CD8-positive, alpha-beta T cell (primary cell): ENCODE measurements at regions of chr17 and their contacts with region 1.

Region 1: DNA sequence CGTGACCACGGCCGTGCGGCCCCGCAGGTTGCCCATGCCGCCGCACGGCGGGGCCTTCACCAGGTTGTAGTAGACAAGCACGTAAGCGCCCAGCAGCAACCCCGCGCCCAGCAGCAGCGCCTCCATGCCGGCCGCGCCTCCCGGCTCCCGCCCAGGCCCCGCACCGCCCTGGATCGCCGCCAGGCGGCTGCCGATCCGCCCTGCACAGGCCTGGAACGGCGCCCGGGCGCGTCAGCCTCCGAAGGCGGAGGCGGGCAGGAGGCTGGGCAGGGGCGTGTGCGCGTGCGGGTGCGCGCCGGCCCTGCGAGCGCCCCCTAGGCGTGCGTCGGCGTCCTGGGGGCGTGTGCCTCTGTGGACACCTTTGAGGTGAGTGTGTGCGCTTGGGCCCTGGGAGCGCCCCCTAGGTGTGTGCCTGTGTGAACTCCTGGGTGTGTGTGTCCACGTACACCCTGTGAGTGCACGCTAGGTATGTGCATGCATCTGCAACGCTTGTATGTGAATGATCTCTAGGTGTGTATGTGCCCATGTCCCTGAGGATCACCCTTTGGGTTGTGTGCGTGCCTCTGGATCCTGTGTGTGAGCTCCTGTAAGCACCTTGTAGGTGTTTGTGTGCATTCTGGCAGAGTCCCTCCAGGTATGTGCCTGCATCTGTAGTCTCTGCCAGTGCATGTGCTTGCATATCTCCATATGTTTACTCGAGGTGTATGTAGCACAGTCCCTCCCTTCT is at the start of gene DHRS13:
- DNase-seq: peak; percentile 87 to 98 (median 95)
- ATAC-seq: peak; percentile 93
- H3K4me3 ChIP-seq: peak within 1 kb of the TSS; percentile 71 to 72
- H3K4me3 Mint-ChIP-seq: peak within 1 kb of the TSS; percentile 93
- H3K27ac ChIP-seq: peak within 1 kb of the TSS; percentile 61 to 62
- H3K27ac Mint-ChIP-seq: peak within 1 kb of the TSS; percentile 90
- H3K4me1 ChIP-seq: peaks cover 31% of the 10 kb centered on the region
- H3K4me1 Mint-ChIP-seq: peaks cover 33% of the 10 kb centered on the region
- H3K27me3 ChIP-seq: no peaks in the 10 kb centered on the region
- H3K27me3 Mint-ChIP-seq: no peaks in the 10 kb centered on the region
- CTCF ChIP-seq: peak; percentile 100
- total RNA-seq, gene DHRS13: 27.3 to 30.9 TPM

Region 2: DNA sequence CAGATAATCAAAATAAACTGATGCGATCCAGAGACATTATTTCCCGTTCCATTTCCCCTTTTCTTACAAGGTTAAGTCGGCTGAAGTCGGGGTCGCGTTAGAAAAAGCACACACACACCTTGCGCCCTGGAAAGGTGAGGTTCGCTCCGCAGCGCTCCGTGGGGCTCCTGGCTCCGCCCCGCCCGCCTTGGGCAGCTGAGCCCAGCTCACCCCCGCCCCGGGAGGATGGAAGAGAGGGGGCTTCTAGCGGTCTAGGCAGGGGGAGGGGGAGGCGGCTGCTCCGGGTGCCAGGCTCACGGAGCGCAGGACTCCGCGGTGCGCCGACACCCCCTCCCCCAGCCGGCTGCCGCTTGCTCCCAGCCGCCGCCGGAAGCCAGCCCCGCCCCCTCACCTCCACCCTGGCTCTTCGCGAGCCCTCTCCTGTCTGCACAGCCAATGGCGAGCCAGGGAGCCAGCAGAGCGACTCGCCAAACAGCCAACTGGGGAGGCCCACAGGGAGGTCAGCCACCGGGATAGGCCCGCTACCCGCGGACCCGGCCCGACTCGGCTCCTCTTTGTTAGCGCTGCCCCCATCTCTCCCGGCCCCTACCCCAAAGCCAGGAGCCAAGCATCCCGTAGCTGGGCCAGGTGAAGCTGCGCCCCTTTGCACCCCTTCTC is 90.8 kb before region 1 on chr17:
- CTCF ChIA-PET with region 1: interaction called, 3 read pairs
- POLR2A ChIA-PET with region 1: interaction called, 4 read pairs
- intact Hi-C with region 1: loop called (anchors 1 kb)
- DNase-seq: peak; percentile 90 to 98 (median 96)
- ATAC-seq: peak; percentile 96
- H3K4me3 ChIP-seq: peak overlapping the region; percentile 67 to 99
- H3K4me3 Mint-ChIP-seq: peak overlapping the region; percentile 94
- H3K27ac ChIP-seq: peak overlapping the region; percentile 93 to 96
- H3K27ac Mint-ChIP-seq: peak overlapping the region; percentile 93
- H3K4me1 ChIP-seq: peaks cover 18% of the 10 kb centered on the region
- H3K4me1 Mint-ChIP-seq: peaks cover 35% of the 10 kb centered on the region
- H3K27me3 ChIP-seq: no peaks in the 10 kb centered on the region
- H3K27me3 Mint-ChIP-seq: no peaks in the 10 kb centered on the region
- CTCF ChIP-seq: no peak

Region 3: GRCh38 chr17:28849281-28849680 is 53.7 kb before region 1 on chr17:
- CTCF ChIA-PET with region 1: interaction called, 7 read pairs
- POLR2A ChIA-PET with region 1: interaction called, 5 read pairs
- intact Hi-C with region 1: loop called (anchors 1 to 2 kb)
- DNase-seq: peak in 3 of 9 experiments; percentile 13 to 32 (median 29)
- ATAC-seq: no peak
- H3K4me3 ChIP-seq: no peak overlapping the region
- H3K4me3 Mint-ChIP-seq: no peak overlapping the region
- H3K27ac ChIP-seq: no peak overlapping the region
- H3K27ac Mint-ChIP-seq: no peak overlapping the region
- H3K4me1 ChIP-seq: peaks cover 3% of the 10 kb centered on the region
- H3K4me1 Mint-ChIP-seq: peaks cover 6% of the 10 kb centered on the region
- H3K27me3 ChIP-seq: no peaks in the 10 kb centered on the region
- H3K27me3 Mint-ChIP-seq: no peaks in the 10 kb centered on the region
- CTCF ChIP-seq: no peak

Region 4: GRCh38 chr17:28916302-28916934 is 13.4 kb after region 1 on chr17:
- CTCF ChIA-PET with region 1: interaction called, 13 read pairs
- POLR2A ChIA-PET with region 1: interaction called, 4 read pairs
- intact Hi-C with region 1: loop called in 1 of 2 experiments (anchors 1 kb)
- DNase-seq: peak in 6 of 9 experiments; percentile 44 to 67 (median 54)
- ATAC-seq: peak; percentile 75
- H3K4me3 ChIP-seq: no peak overlapping the region
- H3K4me3 Mint-ChIP-seq: no peak overlapping the region
- H3K27ac ChIP-seq: no peak overlapping the region
- H3K27ac Mint-ChIP-seq: peak overlapping the region; percentile 65
- H3K4me1 ChIP-seq: no peaks in the 10 kb centered on the region
- H3K4me1 Mint-ChIP-seq: peaks cover 1% of the 10 kb centered on the region
- H3K27me3 ChIP-seq: no peaks in the 10 kb centered on the region
- H3K27me3 Mint-ChIP-seq: no peaks in the 10 kb centered on the region
- CTCF ChIP-seq: peak; percentile 74

Region 5: GRCh38 chr17:29005936-29006511 is 103.0 kb after region 1 on chr17 and contains the start of gene SEZ6:
- CTCF ChIA-PET with region 1: no interaction called
- POLR2A ChIA-PET with region 1: no interaction called
- intact Hi-C with region 1: no loop called
- DNase-seq: peak in 8 of 9 experiments; percentile 33 to 69 (median 63)
- ATAC-seq: peak; percentile 92
- H3K4me3 ChIP-seq: no peak within 1 kb of the TSS
- H3K4me3 Mint-ChIP-seq: no peak within 1 kb of the TSS
- H3K27ac ChIP-seq: no peak within 1 kb of the TSS
- H3K27ac Mint-ChIP-seq: no peak within 1 kb of the TSS
- H3K4me1 ChIP-seq: peaks cover 5% of the 10 kb centered on the region
- H3K4me1 Mint-ChIP-seq: peaks cover 4% of the 10 kb centered on the region
- H3K27me3 ChIP-seq: peaks cover 21% of the 10 kb centered on the region in 2 experiments
- H3K27me3 Mint-ChIP-seq: peaks cover 58% of the 10 kb centered on the region
- CTCF ChIP-seq: no peak
- total RNA-seq, gene SEZ6: 0.56 TPM in 1 of 2 experiments, not detected in the other

Region 6: DNA sequence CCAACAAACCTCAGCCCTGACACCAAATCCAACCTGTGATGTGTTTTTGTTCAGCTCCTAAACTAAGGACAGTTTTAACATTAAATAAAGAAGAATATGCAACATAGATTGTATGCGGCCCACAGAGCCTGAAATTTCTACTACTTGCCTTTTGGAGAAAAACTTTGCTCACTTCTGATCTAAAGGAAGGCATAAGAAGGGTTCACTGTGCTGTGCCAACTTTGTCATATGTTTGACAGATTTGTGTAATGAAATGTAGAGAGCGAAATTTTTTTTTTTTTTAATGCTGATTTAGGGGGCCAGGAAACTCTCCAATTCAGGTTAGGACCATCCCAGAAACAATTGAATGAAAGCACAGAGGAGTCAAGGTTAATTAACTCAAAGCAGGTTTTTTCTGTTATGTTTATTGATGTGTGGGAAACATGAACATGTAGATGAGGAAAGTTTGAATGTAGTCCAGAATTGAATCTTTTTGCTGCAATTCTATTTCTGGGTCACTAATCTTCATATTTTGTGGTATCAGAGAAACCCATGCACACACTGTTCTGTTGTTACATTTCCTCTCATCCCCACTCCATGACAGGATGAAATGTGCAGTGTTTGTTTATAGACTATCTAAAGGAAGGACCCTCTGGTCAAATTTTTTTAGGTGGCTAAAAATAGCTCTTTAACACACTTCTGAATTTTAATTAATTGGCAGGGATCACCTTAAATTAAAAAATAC is 558.7 kb after region 1 on chr17:
- CTCF ChIA-PET with region 1: no interaction called
- POLR2A ChIA-PET with region 1: no interaction called
- intact Hi-C with region 1: no loop called
- DNase-seq: no peak
- ATAC-seq: no peak
- H3K4me3 ChIP-seq: no peak overlapping the region
- H3K4me3 Mint-ChIP-seq: no peak overlapping the region
- H3K27ac ChIP-seq: no peak overlapping the region
- H3K27ac Mint-ChIP-seq: peak overlapping the region; percentile 55
- H3K4me1 ChIP-seq: no peaks in the 10 kb centered on the region
- H3K4me1 Mint-ChIP-seq: peaks cover 26% of the 10 kb centered on the region
- H3K27me3 ChIP-seq: no peaks in the 10 kb centered on the region
- H3K27me3 Mint-ChIP-seq: no peaks in the 10 kb centered on the region
- CTCF ChIP-seq: no peak